Activated naive CD4-positive, alpha-beta T cell treated with anti-CD3 and anti-CD28 coated beads for 36 hours (primary cell): ENCODE measurements at regions of chr11 and their contacts with region 1.

Region 1: DNA sequence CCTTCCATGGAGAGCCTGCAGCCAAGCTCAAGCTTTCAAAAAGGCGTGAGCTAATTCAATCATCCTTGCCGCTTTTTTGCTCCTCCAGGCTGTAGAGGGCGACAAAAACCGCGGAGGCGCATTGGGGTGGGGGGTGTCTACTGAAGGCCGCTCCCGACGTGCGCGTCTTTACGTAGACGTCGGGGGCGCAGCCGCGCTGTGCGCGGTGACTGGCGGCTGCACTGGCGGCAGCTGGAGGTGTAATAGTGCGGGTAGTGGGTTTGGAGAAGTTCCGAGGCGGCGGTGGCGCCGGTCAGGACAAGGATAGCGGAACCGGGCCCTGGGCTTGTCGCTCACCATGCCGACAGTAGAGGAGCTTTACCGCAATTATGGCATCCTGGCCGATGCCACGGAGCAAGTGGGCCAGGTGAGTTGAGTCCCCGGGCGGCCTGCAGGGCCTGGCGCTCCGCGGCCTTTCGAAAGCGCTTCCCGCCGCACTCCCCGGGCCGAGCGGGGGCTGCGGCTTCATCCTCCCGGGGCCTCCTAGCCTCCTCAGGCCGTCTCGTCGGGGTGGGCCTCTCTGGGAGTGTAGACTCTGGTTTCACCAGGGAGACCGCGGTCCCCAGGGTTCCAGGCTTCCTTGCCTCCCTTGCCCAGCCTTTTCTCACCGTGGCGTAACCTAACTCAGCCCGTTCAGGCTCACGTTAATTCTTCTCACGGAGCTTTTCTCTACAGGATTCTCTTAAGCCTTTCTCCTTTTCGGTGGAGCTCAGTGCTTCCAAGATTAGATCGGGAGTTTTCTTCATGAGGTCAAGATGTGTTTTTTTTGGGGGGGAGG is at the start of gene API5:
- DNase-seq: peak; percentile 96
- H3K4me3 Mint-ChIP-seq: peak within 1 kb of the TSS; percentile 90
- H3K27ac Mint-ChIP-seq: peak within 1 kb of the TSS; percentile 88
- H3K4me1 Mint-ChIP-seq: peaks cover 37% of the 10 kb centered on the region
- H3K27me3 Mint-ChIP-seq: no peaks in the 10 kb centered on the region
- total RNA-seq, gene API5: 139 to 147 TPM

Region 2: DNA sequence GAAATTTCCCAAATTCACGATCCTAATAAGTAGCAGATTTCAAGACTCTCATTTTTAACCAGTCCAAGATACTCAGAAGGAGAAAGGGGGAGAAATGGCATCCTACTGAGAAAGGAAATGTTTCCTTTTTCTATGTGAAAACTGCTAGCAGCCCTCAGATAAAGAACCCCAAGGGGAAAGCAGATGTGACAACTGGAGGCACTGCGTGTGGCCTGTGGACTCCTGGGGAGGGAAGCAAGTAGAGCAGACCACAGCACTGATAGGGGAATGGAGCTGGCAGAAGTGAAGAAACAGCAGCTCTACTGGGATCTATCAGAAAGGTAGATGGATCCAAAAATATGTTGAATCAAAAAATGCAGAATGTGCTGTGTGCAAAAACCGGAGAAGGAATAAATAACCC is 239.9 kb before region 1 on chr11:
- CTCF ChIA-PET with region 1: no interaction called
- intact Hi-C with region 1: no loop called
- DNase-seq: no peak
- H3K4me3 Mint-ChIP-seq: no peak overlapping the region
- H3K27ac Mint-ChIP-seq: no peak overlapping the region
- H3K4me1 Mint-ChIP-seq: no peaks in the 10 kb centered on the region
- H3K27me3 Mint-ChIP-seq: peaks cover 11% of the 10 kb centered on the region

Region 3: GRCh38 chr11:43164826-43165225 is 147.2 kb before region 1 on chr11:
- CTCF ChIA-PET with region 1: no interaction called
- intact Hi-C with region 1: loop called (anchors 10 kb)
- DNase-seq: no peak
- H3K4me3 Mint-ChIP-seq: no peak overlapping the region
- H3K27ac Mint-ChIP-seq: no peak overlapping the region
- H3K4me1 Mint-ChIP-seq: no peaks in the 10 kb centered on the region
- H3K27me3 Mint-ChIP-seq: no peaks in the 10 kb centered on the region

Region 4: GRCh38 chr11:43234881-43235280 is 77.1 kb before region 1 on chr11:
- CTCF ChIA-PET with region 1: no interaction called
- intact Hi-C with region 1: no loop called
- DNase-seq: no peak
- H3K4me3 Mint-ChIP-seq: no peak overlapping the region
- H3K27ac Mint-ChIP-seq: no peak overlapping the region
- H3K4me1 Mint-ChIP-seq: no peaks in the 10 kb centered on the region
- H3K27me3 Mint-ChIP-seq: peaks cover 2% of the 10 kb centered on the region

Region 5: GRCh38 chr11:43367382-43368178 is 55.6 kb after region 1 on chr11:
- CTCF ChIA-PET with region 1: no interaction called
- intact Hi-C with region 1: no loop called
- DNase-seq: no peak
- H3K4me3 Mint-ChIP-seq: no peak overlapping the region
- H3K27ac Mint-ChIP-seq: no peak overlapping the region
- H3K4me1 Mint-ChIP-seq: peaks cover 54% of the 10 kb centered on the region
- H3K27me3 Mint-ChIP-seq: no peaks in the 10 kb centered on the region

Region 6: GRCh38 chr11:43399983-43400630 is 88.1 kb after region 1 on chr11:
- CTCF ChIA-PET with region 1: interaction called, 3 read pairs
- intact Hi-C with region 1: loop called (anchors 5 kb)
- DNase-seq: peak; percentile 48
- H3K4me3 Mint-ChIP-seq: no peak overlapping the region
- H3K27ac Mint-ChIP-seq: peak overlapping the region; percentile 47
- H3K4me1 Mint-ChIP-seq: peaks cover 46% of the 10 kb centered on the region
- H3K27me3 Mint-ChIP-seq: no peaks in the 10 kb centered on the region

Region 7: GRCh38 chr11:43567396-43567975 is 255.5 kb after region 1 on chr11:
- CTCF ChIA-PET with region 1: interaction called, 3 read pairs
- intact Hi-C with region 1: loop called (anchors 1 kb)
- DNase-seq: no peak
- H3K4me3 Mint-ChIP-seq: no peak overlapping the region
- H3K27ac Mint-ChIP-seq: no peak overlapping the region
- H3K4me1 Mint-ChIP-seq: no peaks in the 10 kb centered on the region
- H3K27me3 Mint-ChIP-seq: peaks cover 61% of the 10 kb centered on the region

Region 8: GRCh38 chr11:43680521-43681400 is 368.8 kb after region 1 on chr11 and contains the start of gene HSD17B12:
- CTCF ChIA-PET with region 1: no interaction called
- intact Hi-C with region 1: loop called (anchors 2 kb)
- DNase-seq: peak; percentile 99
- H3K4me3 Mint-ChIP-seq: peak within 1 kb of the TSS; percentile 91
- H3K27ac Mint-ChIP-seq: peak within 1 kb of the TSS; percentile 89
- H3K4me1 Mint-ChIP-seq: peaks cover 31% of the 10 kb centered on the region
- H3K27me3 Mint-ChIP-seq: no peaks in the 10 kb centered on the region
- total RNA-seq, gene HSD17B12: 31.7 to 33.8 TPM

Region 9: GRCh38 chr11:43868852-43869567 is 557.0 kb after region 1 on chr11:
- CTCF ChIA-PET with region 1: no interaction called
- intact Hi-C with region 1: loop called (anchors 5 kb)
- DNase-seq: peak; percentile 70
- H3K4me3 Mint-ChIP-seq: no peak overlapping the region
- H3K27ac Mint-ChIP-seq: peak overlapping the region; percentile 28
- H3K4me1 Mint-ChIP-seq: peaks cover 24% of the 10 kb centered on the region
- H3K27me3 Mint-ChIP-seq: peaks cover 46% of the 10 kb centered on the region